Mammary epithelial cell (primary cell): ENCODE measurements at regions of chr3 and their contacts with region 1.

Region 1: GRCh38 chr3:185992831-185993374 is 55.1 kb upstream of the TRA2B start:
- DNase-seq: no peak
- H3K4me3 ChIP-seq: no peak overlapping the region
- H3K27ac ChIP-seq: no peak overlapping the region
- H3K4me1 ChIP-seq: no peaks in the 10 kb centered on the region
- H3K27me3 ChIP-seq: peaks cover 3% of the 10 kb centered on the region
- CTCF ChIP-seq: no peak

Region 2: DNA sequence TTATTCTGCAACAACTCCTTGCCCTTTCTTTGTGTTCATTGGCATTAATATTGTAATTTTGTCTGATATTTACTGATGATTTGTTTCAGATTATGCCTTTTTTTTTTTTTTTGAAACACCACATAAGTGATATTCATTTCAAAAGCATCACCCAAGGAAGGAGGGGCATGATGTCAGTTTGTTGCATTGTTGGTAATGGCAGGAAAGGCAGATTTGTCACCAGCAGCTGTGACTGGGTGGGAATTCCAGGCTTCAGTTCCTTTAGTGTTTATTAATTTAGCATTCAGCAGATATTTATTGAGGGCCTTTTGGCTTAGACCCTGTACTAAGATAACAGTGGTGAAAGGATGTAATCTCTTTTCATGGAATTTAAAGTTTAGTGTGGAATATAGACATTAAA is 387.3 kb before region 1 on chr3:
- CTCF ChIA-PET with region 1: no interaction called
- dilution Hi-C with region 1: no loop called
- in situ Hi-C with region 1: no loop called
- intact Hi-C with region 1: no loop called
- DNase-seq: no peak
- H3K4me3 ChIP-seq: no peak overlapping the region
- H3K27ac ChIP-seq: no peak overlapping the region
- H3K4me1 ChIP-seq: no peaks in the 10 kb centered on the region
- H3K27me3 ChIP-seq: no peaks in the 10 kb centered on the region
- CTCF ChIP-seq: no peak

Region 3: DNA sequence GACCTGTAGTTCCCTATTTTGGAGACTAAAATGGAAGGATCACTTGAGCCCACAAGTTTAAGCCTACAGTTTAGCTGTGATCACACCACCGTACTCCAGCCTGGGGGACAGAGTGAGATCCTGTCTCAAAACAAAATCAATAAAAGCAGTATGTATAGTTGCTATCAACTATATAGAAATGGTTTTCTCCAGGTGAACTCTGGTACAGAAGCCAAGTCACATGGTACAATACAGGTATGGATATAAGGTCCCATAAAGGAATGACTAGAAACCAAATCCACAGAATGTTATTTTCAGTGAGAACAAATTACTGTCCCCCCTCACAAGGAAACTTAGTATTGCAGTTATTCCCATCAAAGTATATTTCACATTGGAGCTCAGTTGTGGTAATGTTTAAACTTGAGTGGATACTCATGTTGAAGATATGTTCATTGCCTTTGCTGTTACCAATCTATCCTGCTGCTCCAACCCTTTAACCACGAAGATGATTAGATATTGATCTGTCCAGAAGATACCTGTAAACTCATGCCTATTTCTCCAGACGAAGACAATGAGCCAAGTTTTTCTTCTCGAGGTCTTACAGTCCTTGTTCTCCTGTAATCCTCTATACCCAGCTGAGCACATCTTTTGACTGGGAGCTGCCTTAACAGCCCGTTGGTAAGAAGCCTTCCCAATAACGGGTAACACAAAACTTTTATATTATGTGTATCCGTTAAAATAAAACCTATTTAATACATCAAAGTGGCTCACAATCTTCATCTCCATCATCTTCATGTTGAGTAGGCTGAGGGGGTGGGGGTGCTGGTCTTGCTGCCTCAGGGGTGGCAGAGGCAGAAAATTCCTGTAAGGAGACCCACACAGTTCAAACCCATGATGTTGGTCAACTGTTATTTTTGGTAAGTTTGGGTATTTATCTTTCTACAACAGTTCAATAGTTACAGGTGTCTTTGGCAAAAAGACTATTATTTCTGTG is 79.7 kb before region 1 on chr3:
- CTCF ChIA-PET with region 1: interaction called, 5 read pairs
- dilution Hi-C with region 1: loop called (anchors 5 kb)
- in situ Hi-C with region 1: no loop called
- intact Hi-C with region 1: no loop called
- DNase-seq: no peak
- H3K4me3 ChIP-seq: no peak overlapping the region
- H3K27ac ChIP-seq: no peak overlapping the region
- H3K4me1 ChIP-seq: no peaks in the 10 kb centered on the region
- H3K27me3 ChIP-seq: no peaks in the 10 kb centered on the region
- CTCF ChIP-seq: no peak

Region 4: GRCh38 chr3:185942907-185943759 is 49.8 kb before region 1 on chr3:
- CTCF ChIA-PET with region 1: no interaction called
- dilution Hi-C with region 1: loop called (anchors 5 kb)
- in situ Hi-C with region 1: no loop called
- intact Hi-C with region 1: no loop called
- DNase-seq: peak; percentile 81
- H3K4me3 ChIP-seq: no peak overlapping the region
- H3K27ac ChIP-seq: no peak overlapping the region
- H3K4me1 ChIP-seq: peaks cover 21% of the 10 kb centered on the region
- H3K27me3 ChIP-seq: peaks cover 2% of the 10 kb centered on the region
- CTCF ChIP-seq: peak; percentile 97 to 99

Region 5: DNA sequence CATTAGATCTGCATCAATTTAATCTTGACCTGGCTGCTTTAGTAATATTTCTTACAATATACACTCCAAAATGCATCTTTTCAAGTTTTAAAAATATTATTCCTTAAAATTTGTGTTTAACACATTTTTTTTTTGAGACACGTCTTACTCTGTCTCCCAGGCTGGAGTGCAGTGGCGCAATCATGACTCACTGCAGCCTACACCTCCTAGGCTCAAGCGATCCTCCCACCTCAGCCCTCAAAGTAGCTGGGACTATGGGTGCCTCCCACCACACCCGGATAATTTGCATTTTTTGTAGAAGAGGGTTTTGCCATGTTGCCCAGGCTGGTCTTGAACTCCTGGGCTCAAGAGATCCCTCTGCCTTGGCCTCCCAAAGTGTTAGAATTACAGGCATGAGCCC is 42.4 kb after region 1 on chr3:
- CTCF ChIA-PET with region 1: no interaction called
- dilution Hi-C with region 1: loop called (anchors 5 kb)
- in situ Hi-C with region 1: no loop called
- intact Hi-C with region 1: no loop called
- DNase-seq: peak; percentile 33
- H3K4me3 ChIP-seq: no peak overlapping the region
- H3K27ac ChIP-seq: no peak overlapping the region
- H3K4me1 ChIP-seq: no peaks in the 10 kb centered on the region
- H3K27me3 ChIP-seq: no peaks in the 10 kb centered on the region
- CTCF ChIP-seq: no peak

Region 6: DNA sequence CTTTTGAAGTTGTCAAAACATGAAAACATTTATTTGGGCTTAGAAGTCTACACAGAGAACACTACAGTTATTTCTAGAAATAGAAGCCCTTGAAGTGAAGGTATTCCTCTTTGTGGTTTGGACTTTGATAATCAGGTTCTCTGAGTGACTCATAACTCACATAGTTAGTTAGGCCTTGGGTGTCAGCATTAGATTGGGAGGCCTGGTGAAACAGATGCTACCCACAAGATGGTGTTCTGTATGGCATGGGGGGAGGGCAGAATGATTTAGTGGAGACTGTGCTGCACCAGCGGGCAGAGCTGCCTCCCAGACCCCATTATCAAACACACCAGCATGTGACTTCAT is 224.9 kb after region 1 on chr3:
- CTCF ChIA-PET with region 1: no interaction called
- dilution Hi-C with region 1: loop called (anchors 5 kb)
- in situ Hi-C with region 1: no loop called
- intact Hi-C with region 1: no loop called
- DNase-seq: peak; percentile 36
- H3K4me3 ChIP-seq: no peak overlapping the region
- H3K27ac ChIP-seq: no peak overlapping the region
- H3K4me1 ChIP-seq: peaks cover 11% of the 10 kb centered on the region
- H3K27me3 ChIP-seq: no peaks in the 10 kb centered on the region
- CTCF ChIP-seq: no peak

Region 7: GRCh38 chr3:186534113-186534669 is 541.3 kb after region 1 on chr3:
- CTCF ChIA-PET with region 1: no interaction called
- dilution Hi-C with region 1: loop called (anchors 10 kb)
- in situ Hi-C with region 1: loop called in 1 of 2 experiments (anchors 10 kb)
- intact Hi-C with region 1: no loop called
- DNase-seq: no peak
- H3K4me3 ChIP-seq: no peak overlapping the region
- H3K27ac ChIP-seq: no peak overlapping the region
- H3K4me1 ChIP-seq: no peaks in the 10 kb centered on the region
- H3K27me3 ChIP-seq: no peaks in the 10 kb centered on the region
- CTCF ChIP-seq: no peak